Activated CD8-positive, alpha-beta T cell treated with anti-CD3 and anti-CD28 coated beads, Interleukin-2, amount 10 ng/mL, durations not matched to agents 7 days and 5 days (primary cell): ENCODE measurements at regions of chr15 and their contacts with region 1.

Region 1: DNA sequence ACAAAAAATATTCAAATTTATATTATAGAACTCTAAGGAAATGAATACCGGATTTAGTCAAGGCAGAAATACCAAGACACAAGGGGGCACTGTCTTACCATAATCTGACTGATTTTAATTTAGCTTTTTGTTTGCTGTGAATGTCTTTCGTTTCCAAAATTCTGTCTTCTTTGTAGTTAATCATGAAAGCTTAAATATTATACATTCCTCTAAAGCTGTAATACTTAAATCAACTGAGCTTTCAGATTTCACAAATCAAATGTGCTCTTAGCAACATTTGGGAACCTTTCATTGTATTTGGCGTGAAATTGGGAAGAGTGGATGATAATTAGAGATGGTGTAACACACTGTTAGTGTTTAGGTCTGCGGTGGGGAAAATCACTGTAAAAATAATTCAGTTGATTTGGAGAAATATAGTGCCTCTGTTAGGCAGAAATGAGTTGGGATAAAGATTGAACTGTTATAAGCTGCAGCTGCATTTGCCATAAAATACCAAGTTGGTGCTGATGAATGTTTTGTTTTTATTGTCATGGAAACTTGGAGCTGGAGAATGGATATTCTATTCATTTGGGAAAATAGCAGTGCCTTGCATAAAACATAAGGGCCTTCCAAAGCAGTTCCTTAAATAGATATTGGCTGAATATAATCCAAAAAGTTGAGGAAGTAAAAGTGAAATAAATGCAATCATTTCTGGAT is 228.2 kb downstream of the TCF12 start:
- DNase-seq: peak; percentile 28
- ATAC-seq: no peak
- H3K4me3 Mint-ChIP-seq: no peak overlapping the region
- H3K27ac Mint-ChIP-seq: no peak overlapping the region
- H3K4me1 Mint-ChIP-seq: peaks cover 3% of the 10 kb centered on the region
- H3K27me3 Mint-ChIP-seq: no peaks in the 10 kb centered on the region

Region 2: GRCh38 chr15:56824175-56824574 is 322.5 kb before region 1 on chr15:
- CTCF ChIA-PET with region 1: no interaction called
- POLR2A ChIA-PET with region 1: no interaction called
- DNase-seq: no peak
- ATAC-seq: no peak
- H3K4me3 Mint-ChIP-seq: no peak overlapping the region
- H3K27ac Mint-ChIP-seq: no peak overlapping the region
- H3K4me1 Mint-ChIP-seq: no peaks in the 10 kb centered on the region
- H3K27me3 Mint-ChIP-seq: no peaks in the 10 kb centered on the region

Region 3: GRCh38 chr15:57213862-57214261 is 67.2 kb after region 1 on chr15:
- CTCF ChIA-PET with region 1: interaction called, 26 read pairs
- POLR2A ChIA-PET with region 1: no interaction called
- DNase-seq: no peak
- ATAC-seq: no peak
- H3K4me3 Mint-ChIP-seq: no peak overlapping the region
- H3K27ac Mint-ChIP-seq: no peak overlapping the region
- H3K4me1 Mint-ChIP-seq: peaks cover 5% of the 10 kb centered on the region
- H3K27me3 Mint-ChIP-seq: no peaks in the 10 kb centered on the region

Region 4: GRCh38 chr15:57306161-57306943 is 159.7 kb after region 1 on chr15:
- CTCF ChIA-PET with region 1: interaction called, 97 read pairs
- POLR2A ChIA-PET with region 1: no interaction called
- DNase-seq: peak; percentile 83
- ATAC-seq: peak; percentile 93
- H3K4me3 Mint-ChIP-seq: peak overlapping the region; percentile 57
- H3K27ac Mint-ChIP-seq: no peak overlapping the region
- H3K4me1 Mint-ChIP-seq: peaks cover 7% of the 10 kb centered on the region
- H3K27me3 Mint-ChIP-seq: peaks cover 9% of the 10 kb centered on the region